SK-N-SH (cell line): ENCODE measurements at regions of chr2 and their contacts with region 1.

Region 1: DNA sequence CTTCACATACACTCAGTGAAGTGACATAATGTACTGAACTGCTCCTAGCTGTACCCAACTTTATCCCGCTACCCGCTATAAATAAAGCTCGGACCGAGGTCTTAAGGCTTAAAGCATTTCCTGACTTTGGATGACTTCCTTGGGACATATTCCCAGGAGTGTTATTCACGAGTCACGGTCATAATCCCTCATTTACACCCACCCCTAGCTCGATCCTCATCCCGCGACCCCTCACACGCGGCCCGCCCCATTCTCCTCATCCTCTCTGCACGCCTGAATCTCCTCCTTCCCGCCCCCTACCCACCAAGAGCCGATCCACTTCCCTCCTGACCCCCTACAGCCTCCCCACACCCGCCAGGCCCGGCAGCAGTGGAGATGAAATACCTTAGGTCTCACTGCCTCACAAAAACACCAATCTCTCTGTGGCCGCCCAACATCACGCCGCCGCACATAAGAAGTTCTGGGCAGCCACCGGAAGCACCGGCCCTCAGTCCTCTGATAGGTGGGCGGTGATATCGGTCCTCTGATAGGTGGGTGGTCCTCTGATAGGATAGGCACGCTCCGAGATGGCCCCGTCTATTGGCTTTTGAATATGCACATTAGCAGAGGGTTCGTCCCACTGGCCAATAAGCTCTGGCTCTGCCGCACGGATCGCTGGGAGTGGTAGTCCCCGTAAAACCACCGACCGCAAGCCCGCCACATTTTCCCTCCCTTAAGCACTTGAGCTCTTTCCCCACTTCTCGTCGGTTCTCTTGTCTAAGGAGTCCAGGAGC is at the start of gene WDCP:
- DNase-seq: peak; percentile 93
- H3K4me3 ChIP-seq: peak within 1 kb of the TSS; percentile 75 to 89
- H3K27ac ChIP-seq: peak within 1 kb of the TSS; percentile 54 to 74; a peak in 3 of 4 replicates
- H3K4me1 ChIP-seq: peaks cover 3 to 16% of the 10 kb centered on the region in 2 experiments; a peak in 2 of 4 replicates
- H3K27me3 ChIP-seq: no peaks in the 10 kb centered on the region
- CTCF ChIP-seq: no peak
- EP300 ChIP-seq: no peak
- RAD21 ChIP-seq: no peak
- polyA plus RNA-seq, gene WDCP: 7.1 and 11.9 TPM in 2 replicates

Region 2: DNA sequence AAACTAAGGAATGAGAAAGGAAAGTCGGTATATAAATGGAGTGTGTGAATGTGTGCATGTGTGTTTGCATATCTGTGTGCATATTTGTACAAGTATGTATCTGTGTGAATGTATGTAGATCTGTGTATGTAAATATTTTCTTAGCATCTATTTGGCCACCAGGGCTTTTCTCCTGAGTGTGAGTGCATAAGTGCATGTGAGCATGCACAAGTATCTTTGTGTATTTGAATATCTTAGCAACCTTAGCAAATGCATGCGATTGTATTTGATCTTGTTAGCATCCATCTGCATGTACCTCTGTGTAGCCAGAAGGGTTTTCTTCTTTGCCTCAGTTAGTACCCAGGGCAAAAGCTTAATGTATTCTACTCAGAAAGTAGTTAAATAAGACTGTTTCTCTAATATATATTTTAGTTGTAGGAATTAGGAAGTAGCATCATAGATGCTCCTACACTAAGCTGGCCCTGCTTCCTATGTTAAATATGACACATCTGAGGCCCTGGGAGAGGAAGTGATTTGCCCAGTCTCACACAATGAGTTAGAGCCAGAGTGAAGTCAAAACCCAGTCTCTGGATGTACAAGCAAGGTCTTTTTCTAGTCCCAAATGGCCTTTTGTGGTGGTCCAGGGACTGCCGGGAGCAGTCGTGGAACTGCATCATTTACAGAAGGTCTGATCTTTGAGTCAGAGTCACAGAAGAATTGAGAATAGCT is 11.6 kb after region 1 on chr2:
- CTCF ChIA-PET with region 1: interaction called, 43 read pairs
- POLR2A ChIA-PET with region 1: interaction called, 4 read pairs
- DNase-seq: no peak
- H3K4me3 ChIP-seq: no peak overlapping the region
- H3K27ac ChIP-seq: no peak overlapping the region
- H3K4me1 ChIP-seq: peaks cover 0 to 9% of the 10 kb centered on the region in 2 experiments; a peak in 1 of 4 replicates
- H3K27me3 ChIP-seq: no peaks in the 10 kb centered on the region
- CTCF ChIP-seq: peak; percentile 8; the same call in 1 of the 2 replicates
- EP300 ChIP-seq: no peak
- RAD21 ChIP-seq: no peak

Region 3: GRCh38 chr2:24075915-24076848 is 29.1 kb after region 1 on chr2 and contains the start of gene SF3B6:
- CTCF ChIA-PET with region 1: interaction called, 5 read pairs
- POLR2A ChIA-PET with region 1: interaction called, 16 read pairs
- DNase-seq: peak; percentile 96
- H3K4me3 ChIP-seq: peak within 1 kb of the TSS; percentile 82
- H3K27ac ChIP-seq: peak within 1 kb of the TSS; percentile 79 to 91
- H3K4me1 ChIP-seq: peaks cover 7% of the 10 kb centered on the region in 2 experiments; a peak in 2 of 4 replicates
- H3K27me3 ChIP-seq: no peaks in the 10 kb centered on the region
- CTCF ChIP-seq: no peak
- EP300 ChIP-seq: peak; percentile 63 to 67; a peak in 2 of 4 replicates
- RAD21 ChIP-seq: no peak
- polyA plus RNA-seq, gene SF3B6: 275 and 295 TPM in 2 replicates